Left cardiac atrium (tissue), 4 donors: ENCODE measurements at regions of chr15 and their contacts with region 1.

Region 1: DNA sequence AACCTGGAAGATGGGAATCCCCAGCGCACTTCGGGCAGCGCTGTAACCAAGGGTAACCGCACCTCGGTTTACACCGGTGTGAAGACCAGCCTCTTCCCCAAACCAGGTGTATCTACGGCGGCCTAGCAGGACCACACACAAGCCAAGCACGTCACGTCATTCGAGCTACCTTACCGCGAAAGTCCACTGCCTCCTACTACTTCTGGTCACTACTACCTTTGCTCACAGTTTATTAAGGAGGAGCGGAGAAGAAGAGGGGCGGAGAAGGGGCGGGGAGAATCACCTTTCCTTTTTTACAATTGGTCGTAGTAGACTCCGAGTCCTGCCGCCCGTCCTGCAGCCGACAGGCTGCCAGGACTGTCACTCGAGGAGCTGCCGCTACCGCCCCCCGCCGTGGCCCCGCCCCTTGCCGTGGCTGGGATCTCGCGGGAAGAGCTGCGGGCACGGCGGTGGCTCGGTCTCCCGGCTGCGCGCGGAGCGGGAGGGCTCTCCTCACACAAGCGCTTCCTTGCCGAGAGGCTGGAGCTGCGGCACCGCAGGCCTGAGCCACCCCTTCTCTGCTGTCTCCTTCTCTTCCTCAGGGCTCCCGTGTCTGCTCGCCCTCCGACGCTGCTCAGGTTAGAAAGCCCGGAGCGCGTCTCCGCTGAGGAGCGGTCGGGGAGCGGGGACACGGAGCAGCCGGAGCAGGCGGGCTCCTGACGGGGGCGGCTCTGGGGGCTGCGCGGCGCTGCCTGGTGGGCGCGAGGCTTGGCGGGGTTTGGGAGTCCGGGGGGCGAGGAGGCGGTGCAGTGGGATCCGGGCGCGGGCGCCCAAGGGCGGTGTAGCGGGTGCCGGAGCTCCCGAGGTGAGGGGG is at the start of gene GLCE:
- DNase-seq: peak; percentile 96
- ATAC-seq: peak; percentile 99
- total RNA-seq, gene GLCE: 9.2 to 11.1 TPM

Region 2: GRCh38 chr15:69074001-69074842 is 86.1 kb before region 1 on chr15:
- intact Hi-C with region 1: loop called in 1 of 2 experiments (anchors 10 kb)
- DNase-seq: peak; percentile 72
- ATAC-seq: peak; percentile 89 to 94

Region 3: GRCh38 chr15:69104050-69104750 is 56.2 kb before region 1 on chr15:
- intact Hi-C with region 1: no loop called
- DNase-seq: no peak
- ATAC-seq: no peak

Region 4: DNA sequence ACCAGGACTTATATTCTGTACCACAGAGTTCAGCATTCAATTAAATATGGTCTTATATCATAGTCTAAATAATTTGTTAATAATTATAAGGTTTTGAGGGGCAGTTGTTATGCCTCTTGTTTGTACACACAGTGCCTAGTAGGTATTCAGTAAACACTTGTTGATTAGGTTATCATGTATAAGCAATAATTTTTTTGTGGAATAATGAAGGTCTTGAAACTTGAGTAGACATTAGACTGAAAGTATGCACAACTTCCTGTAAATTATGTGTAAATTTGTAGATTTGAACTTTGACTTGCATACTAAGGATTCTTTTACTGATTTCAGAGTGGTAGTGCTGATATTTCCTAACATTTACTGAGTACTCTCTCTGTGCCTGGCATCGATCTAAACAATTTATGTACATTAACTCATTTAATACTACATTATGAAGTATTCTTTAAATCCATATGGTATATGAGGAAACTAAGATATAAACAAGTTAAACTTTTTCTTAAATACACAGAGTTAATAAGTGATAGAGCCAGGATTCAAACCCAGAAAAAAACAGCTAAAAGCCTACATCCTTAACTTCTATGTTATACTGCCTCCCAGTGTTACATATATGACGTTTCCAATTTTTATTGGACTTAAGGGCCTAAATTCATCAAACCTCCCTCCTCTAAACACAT is 65.1 kb after region 1 on chr15:
- intact Hi-C with region 1: loop called in 1 of 2 experiments (anchors 10 kb)
- DNase-seq: no peak
- ATAC-seq: no peak

Region 5: GRCh38 chr15:69265347-69265955 is 105.1 kb after region 1 on chr15:
- intact Hi-C with region 1: loop called in 1 of 2 experiments (anchors 2 kb)
- DNase-seq: no peak
- ATAC-seq: no peak

Region 6: DNA sequence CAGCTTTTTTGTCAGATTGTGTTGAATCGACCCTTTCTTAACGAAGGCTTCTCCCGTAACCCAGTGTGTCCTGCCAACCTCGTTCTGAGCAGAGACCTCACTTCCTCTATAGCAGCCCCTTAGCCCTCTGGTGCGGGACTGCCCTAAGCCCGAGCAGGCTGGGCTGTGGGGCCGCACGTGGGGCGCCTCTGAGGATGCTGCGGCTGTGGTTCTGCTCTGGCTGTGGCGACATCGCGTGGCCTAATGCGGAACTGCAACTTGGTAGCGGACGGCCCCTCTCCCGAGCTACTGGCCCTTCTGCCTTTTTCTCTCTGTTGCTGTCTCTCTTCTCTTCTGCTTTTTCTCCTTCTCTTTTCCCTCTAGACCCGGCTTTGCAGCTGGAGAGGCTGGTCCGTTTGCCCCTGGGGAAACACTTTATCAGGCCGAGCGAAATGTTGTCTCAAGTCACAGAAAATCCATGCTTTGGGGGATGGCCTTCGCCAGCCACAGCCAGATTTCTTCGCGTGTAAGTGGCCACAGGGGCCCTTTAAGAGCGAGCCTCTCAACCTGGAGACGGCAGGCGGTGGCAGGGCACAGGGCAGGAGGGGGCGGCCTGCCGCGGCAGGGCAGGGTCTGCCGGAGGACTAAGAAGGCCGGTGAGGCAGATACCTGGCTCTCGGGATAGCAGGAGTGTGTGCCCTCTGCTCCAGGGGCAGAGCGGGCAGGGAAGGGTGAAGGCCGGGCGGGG is 234.4 kb after region 1 on chr15:
- intact Hi-C with region 1: loop called in 1 of 2 experiments (anchors 10 kb)
- DNase-seq: peak; percentile 85
- ATAC-seq: peak; percentile 90 to 92